ENCODE measurements at regions of chr6 and their contacts with region 1.

Region 1: DNA sequence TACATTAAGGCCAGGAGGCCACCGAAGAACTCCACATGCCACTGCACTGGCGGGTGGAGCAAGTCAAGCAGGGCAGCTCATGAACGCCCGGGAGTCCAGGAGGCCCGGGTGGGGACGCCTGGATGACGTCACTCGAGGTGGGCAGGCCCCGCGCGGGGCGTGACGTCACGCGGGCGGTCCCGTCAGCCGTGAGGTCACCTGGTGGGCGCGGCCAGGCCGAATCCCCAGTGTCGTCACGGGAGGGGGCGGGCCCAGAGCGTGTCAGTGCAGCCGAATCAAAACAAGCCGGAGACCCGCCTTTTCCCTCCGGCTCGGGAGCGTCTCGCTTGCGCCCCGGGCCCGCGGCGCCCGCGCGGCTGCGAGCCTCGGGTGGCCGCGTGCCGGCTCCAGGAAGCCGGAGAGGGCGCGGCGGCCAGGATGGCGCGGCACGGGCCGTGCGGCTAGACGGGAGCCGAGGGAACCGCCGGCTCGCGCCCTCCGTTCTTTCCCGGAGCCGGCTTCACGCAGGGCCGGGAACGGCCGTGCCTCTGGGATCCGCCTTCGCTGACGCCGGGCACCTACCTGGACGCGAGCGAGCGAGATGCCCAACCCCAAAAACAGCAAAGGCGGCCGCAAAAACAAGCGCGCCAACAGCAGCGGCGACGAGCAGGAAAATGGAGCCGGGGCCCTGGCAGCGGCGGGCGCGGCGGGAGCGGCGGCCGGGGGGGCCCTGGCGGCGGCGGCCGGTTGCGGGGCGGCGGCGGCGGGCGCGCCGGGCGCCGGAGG is at the start of gene HECA:
- DNase-seq: peak; percentile 93 to 98 (median 97)
- H3K4me3 ChIP-seq: peak within 1 kb of the TSS; percentile 57 to 88 (median 79)
- H3K27ac ChIP-seq: peak within 1 kb of the TSS in 57 of 59 donors; percentile 45 to 97 (median 88)
- H3K27me3 ChIP-seq: no peaks in the 10 kb centered on the region
- CTCF ChIP-seq: peak in 2 of 56 donors; percentile 10 to 17
- total RNA-seq, gene HECA: 19.3 to 43.8 (median 30.8) TPM

Region 2: DNA sequence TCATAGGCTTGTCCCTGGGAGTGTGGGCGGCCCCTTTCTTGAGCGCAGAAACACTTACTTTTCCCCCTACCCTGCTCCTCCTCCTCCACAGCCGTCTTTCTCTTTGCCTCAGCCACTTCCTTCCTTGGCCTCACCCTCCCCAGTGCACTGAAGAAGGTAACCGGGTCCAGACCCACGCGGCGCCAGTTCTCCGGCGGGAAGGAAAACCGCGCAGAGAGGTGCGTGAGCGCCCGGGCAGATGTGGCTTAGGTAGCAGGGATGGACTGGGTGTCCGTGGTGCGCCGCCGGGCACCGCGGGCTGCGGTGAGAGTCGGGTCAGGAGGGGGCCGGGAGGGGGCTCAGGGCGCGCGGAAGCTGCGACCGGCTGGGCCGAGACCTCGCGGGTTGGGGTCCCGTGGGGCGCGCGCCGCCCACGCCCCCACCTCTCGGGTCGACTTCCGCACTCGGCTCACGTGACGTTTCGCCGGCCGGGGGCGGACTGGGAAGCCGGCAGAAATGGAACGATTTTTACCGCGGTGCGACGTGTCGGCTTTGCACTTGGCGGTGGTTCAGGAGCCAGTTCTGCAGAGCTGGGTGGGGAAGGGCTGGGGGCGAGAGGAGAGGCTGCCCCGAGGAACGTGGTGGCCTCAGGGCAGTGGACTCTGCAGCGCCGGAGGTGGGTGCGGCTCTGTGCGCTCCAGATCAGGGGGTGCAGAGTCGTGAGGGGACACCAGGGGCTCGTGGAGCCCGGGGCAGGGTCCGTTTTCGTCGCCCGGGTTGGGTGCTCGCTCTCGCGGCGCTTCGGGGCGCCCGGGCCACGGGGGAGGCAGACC is 106.1 kb before region 1 on chr6 and contains the start of gene ABRACL:
- intact Hi-C with region 1: loop called in 1 of 2 experiments (anchors 5 kb)
- DNase-seq: peak in 9 of 10 donors; percentile 5 to 67 (median 57)
- H3K4me3 ChIP-seq: peak within 1 kb of the TSS; percentile 68 to 96 (median 83)
- H3K27ac ChIP-seq: peak within 1 kb of the TSS in 51 of 59 donors; percentile 7 to 85 (median 67)
- H3K27me3 ChIP-seq: no peaks in the 10 kb centered on the region
- CTCF ChIP-seq: peak in 1 of 56 donors; percentile 14
- total RNA-seq, gene ABRACL: 2.9 to 23.0 (median 14.4) TPM

Region 3: DNA sequence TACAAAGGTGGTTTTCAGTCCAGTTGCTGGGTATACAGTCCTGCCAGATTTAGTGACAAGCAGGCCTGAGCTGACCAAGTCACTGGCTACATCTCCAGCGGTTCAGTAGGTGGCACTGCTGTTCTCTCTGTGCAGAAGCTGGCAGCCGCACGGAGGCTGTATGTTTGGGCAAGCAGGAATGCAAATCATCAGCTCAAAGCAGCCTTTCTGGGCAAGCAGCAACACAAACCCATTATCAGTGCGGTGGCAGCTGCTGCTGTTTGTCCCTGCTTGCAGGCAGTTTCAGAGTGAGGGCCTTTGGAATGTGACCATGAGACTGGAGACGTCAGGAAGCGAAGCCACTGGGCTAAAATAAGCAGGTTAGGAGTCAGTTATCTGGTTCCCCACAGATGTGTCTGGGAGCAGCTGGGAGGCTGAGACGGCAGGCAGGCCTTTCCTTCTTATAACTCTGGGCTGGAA is 84.3 kb after region 1 on chr6:
- intact Hi-C with region 1: loop called in 1 of 2 experiments (anchors 1 kb)
- DNase-seq: peak; percentile 27 to 90 (median 88)
- H3K4me3 ChIP-seq: peak overlapping the region in 16 of 59 donors; percentile 3 to 38 (median 17)
- H3K27ac ChIP-seq: peak overlapping the region in 50 of 59 donors; percentile 4 to 83 (median 59)
- H3K27me3 ChIP-seq: no peaks in the 10 kb centered on the region
- CTCF ChIP-seq: peak; percentile 47 to 89 (median 78)

Region 4: DNA sequence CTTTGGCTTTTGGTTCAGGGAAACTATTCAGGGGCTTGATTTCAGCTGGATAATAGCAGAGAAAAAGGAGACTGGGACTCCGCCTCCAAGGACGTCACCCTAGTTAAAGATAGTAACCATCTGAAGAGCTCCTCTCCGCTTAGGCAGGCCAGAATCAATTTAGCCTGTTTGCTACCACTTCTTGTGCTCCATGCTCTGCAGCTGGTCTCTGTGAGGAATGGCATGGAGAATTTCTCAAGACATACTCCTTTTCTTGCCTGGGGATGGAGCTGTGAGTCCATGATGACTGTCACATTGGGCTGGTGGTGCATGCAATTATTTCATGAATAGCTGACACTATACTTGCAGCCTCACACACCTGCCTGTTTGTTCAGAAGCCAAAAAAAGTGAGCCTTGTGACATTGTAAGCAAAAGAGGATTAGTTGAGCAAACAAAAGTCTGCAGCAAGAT is 95.4 kb after region 1 on chr6:
- intact Hi-C with region 1: no loop called
- DNase-seq: peak in 1 of 10 donors; percentile 32
- H3K4me3 ChIP-seq: no peak overlapping the region
- H3K27ac ChIP-seq: peak overlapping the region in 2 of 59 donors; percentile 12 to 23
- H3K27me3 ChIP-seq: no peaks in the 10 kb centered on the region
- CTCF ChIP-seq: peak in 4 of 56 donors; percentile 8 to 23 (median 22)